Activated CD4-positive, alpha-beta T cell treated with anti-CD3 and anti-CD28 coated beads, Interleukin-2, amount 10 ng/mL, durations not matched to agents 24 days and 14 days (primary cell): ENCODE measurements at regions of chr6 and their contacts with region 1.

Region 1: DNA sequence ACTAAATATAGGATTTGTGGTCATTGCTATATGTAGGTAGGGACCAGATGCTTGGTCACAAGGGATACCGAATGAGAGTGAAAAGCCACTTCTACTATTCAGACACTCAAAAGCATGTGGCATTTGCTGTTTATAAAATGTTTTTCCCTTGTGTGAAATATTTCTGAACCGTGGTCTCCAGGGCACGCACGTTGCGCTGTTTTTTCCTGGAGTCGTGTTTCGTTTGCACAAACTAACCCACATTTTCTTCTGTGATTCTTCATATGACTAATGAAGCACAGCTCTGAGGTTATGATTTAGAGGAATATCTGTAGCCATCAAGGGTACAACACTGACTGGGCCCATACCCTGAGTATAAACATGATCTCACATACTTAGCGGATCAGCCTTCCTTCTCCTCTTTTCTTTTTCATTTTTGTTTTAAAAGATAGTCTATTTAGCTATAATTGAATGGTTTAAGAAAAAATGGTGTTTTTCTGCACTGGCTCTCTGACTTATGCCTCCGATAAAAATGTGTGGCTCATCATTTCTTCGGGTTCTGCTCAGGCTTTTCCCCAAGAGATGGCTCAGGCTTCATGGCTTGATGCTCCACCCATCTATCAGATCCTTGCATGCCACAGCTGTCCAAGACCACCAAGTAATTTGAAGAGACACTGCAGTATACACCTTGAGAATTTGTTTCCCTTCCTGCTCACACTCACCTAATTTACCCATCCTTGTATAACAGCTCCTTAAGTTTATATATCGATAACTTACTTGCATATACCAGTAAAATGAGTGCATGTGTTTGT is 59.9 kb upstream of the HBS1L start:
- DNase-seq: peak; percentile 85
- H3K4me3 Mint-ChIP-seq: peak overlapping the region; percentile 64
- H3K27ac Mint-ChIP-seq: peak overlapping the region; percentile 96
- H3K4me1 Mint-ChIP-seq: peaks cover 69% of the 10 kb centered on the region
- H3K27me3 Mint-ChIP-seq: no peaks in the 10 kb centered on the region

Region 2: GRCh38 chr6:134979142-134979541 is 135.4 kb before region 1 on chr6:
- intact Hi-C with region 1: loop called (anchors 1 kb)
- DNase-seq: peak; percentile 81
- H3K4me3 Mint-ChIP-seq: peak overlapping the region; percentile 14
- H3K27ac Mint-ChIP-seq: peak overlapping the region; percentile 71
- H3K4me1 Mint-ChIP-seq: peaks cover 39% of the 10 kb centered on the region
- H3K27me3 Mint-ChIP-seq: no peaks in the 10 kb centered on the region

Region 3: DNA sequence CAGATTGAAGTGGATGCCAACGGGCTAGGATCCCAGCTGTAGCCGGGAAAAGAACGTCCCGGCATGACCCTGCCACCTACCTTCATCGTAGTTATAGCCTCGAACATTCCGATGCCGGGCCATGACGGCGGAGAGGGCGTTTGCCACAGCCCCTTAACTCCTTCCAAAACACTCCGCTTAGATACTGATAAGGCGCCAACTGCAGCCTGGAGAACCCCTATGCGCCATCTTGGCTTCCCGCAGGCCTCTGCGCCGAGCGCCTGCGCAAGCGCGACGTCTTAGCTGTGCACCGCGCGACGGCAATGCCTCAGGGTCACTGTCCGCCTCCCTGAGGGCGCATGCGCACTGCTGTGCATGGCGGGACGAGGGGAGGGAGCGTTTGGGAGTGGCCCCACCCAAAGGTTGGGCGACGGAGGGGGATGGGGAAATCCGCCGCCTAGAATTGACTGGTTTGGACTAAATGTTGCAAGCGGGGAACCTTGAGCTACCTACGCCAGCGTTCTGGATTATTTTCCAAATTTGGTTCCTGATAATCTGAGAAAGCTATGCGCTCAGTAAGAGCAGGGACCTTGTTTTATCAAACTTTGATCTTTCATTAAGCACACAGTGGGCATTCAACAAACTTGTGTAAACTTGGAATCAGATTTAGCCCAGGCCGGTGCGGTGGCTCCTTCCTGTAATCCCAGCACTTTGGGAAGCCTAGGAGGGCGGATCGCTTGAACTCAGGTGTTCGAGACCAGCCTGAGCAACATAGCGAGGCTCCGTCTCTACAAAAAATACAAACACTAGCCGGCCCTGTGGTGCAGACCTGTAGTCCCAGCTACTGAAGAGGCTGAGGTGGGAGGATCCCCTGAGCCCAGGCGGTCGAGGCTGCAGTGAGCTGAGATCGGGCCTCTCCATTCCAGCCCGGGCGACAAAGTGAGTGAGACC is 59.7 kb before region 1 on chr6 and contains the start of gene HBS1L:
- intact Hi-C with region 1: loop called (anchors 1 kb)
- DNase-seq: peak; percentile 99
- H3K4me3 Mint-ChIP-seq: peak within 1 kb of the TSS; percentile 92
- H3K27ac Mint-ChIP-seq: peak within 1 kb of the TSS; percentile 94
- H3K4me1 Mint-ChIP-seq: peaks cover 32% of the 10 kb centered on the region
- H3K27me3 Mint-ChIP-seq: no peaks in the 10 kb centered on the region
- total RNA-seq, gene HBS1L: 94.4 and 104 TPM in 2 replicates

Region 4: DNA sequence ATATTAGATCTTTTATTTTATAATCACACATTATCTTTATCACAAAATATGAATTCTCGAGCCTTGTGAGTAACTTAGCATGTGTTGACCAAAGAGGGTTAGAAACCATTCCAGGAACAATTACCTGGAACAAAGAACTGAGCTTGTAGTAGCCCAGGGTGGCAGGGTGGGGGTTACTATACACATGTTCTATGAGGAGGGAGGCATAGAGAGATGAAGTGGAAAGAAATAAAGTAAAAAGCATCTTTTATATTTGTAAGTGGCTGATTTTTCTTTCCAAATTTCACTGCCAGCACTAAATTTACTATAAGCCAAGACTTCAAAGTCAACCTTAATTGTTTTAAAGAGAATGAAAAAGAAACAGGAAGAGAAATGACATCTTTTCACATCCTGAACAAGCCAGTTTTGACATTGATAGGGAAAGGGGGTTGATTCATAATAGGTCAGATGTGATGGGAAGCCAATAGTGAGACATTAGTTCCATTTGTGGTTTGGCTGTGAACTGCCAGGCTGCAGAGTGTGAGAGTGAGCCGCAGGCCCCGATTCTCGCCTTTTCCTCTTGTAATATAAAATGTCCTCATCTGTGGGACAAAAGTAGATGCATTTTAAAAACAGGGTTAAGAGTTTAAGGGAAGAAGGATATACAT is 13.8 kb after region 1 on chr6:
- intact Hi-C with region 1: loop called (anchors 1 kb)
- DNase-seq: peak; percentile 86
- H3K4me3 Mint-ChIP-seq: peak overlapping the region; percentile 73
- H3K27ac Mint-ChIP-seq: peak overlapping the region; percentile 91
- H3K4me1 Mint-ChIP-seq: peaks cover 42% of the 10 kb centered on the region
- H3K27me3 Mint-ChIP-seq: no peaks in the 10 kb centered on the region

Region 5: GRCh38 chr6:135170849-135171248 is 56.3 kb after region 1 on chr6:
- intact Hi-C with region 1: loop called (anchors 2 kb)
- DNase-seq: no peak
- H3K4me3 Mint-ChIP-seq: peak overlapping the region; percentile 65
- H3K27ac Mint-ChIP-seq: peak overlapping the region; percentile 94
- H3K4me1 Mint-ChIP-seq: peaks cover 22% of the 10 kb centered on the region
- H3K27me3 Mint-ChIP-seq: no peaks in the 10 kb centered on the region

Region 6: DNA sequence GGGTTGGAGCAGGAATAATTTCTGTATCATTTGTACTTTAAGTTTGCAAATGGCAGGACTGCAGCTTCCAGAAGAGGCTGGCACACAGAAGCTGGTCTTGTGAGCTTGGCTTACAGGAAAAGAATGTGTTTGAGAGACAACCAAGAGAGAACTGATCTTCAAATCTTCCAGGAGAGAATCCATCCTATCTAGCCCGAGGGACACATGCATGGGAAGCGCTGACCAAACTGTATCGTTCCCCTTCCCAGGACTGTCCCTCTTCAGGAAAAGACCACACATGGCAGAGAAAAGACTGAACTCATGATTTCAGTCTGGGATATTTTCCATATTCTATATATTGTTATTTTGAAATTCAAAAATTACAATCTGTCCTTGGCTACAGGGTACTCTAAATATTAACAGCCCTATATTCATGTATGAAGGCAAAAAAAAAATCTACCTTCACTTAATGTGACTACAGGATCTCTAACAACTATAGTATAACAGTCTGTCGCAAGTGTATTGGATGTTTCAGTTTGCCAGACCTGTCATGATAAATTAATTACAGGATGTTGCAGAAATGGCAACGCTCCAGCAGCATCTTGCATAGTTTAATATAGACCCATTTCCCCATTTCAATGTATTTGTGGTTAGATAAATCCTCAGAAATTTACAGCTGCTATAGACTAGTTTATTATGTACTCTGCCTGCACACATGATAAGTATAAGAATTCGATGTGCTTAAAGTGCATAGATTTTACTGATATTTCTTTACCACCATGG is 166.0 kb after region 1 on chr6:
- intact Hi-C with region 1: no loop called
- DNase-seq: no peak
- H3K4me3 Mint-ChIP-seq: no peak overlapping the region
- H3K27ac Mint-ChIP-seq: no peak overlapping the region
- H3K4me1 Mint-ChIP-seq: no peaks in the 10 kb centered on the region
- H3K27me3 Mint-ChIP-seq: peaks cover 19% of the 10 kb centered on the region